ENCODE measurements at regions of chr5 and their contacts with region 1.

Region 1: DNA sequence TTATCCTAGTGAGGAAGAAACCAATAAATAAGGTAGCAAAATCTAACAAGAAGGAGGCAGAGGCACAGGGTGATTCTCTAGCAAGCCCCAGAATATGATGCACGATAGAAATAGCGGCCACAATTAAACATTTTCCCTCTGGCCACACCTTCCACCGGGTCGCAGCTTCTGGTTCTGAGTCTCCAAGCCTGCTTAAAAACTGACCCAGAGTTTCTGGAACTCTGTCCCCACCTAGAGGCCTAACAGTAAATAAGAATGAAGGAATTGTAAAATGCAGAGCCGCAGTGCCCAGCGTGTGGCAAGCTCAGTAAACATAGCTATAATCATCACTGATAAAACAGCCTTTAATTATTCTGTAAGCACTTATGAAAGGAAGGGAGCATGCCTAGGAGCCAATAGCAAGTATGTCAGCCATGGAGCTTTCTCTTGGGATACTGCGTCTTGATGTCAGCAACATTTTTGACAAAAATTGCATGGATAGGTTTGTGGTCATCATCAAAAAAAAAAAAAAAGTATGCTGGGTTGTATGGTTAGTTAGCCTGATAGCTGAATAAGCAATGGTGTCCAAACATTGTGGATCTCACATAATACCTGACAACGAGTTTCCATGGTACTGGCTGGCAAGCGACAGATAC is 465.5 kb downstream of the DNAH5 start:
- DNase-seq: peak; percentile 56
- H3K4me3 ChIP-seq: no peak overlapping the region
- H3K27ac ChIP-seq: no peak overlapping the region
- H3K4me1 ChIP-seq: peaks cover 13% of the 10 kb centered on the region
- H3K27me3 ChIP-seq: peaks cover 1 to 4% of the 10 kb centered on the region in 2 experiments
- CTCF ChIP-seq: peak; percentile 36 to 46
- POLR2A ChIP-seq: no peak

Region 2: DNA sequence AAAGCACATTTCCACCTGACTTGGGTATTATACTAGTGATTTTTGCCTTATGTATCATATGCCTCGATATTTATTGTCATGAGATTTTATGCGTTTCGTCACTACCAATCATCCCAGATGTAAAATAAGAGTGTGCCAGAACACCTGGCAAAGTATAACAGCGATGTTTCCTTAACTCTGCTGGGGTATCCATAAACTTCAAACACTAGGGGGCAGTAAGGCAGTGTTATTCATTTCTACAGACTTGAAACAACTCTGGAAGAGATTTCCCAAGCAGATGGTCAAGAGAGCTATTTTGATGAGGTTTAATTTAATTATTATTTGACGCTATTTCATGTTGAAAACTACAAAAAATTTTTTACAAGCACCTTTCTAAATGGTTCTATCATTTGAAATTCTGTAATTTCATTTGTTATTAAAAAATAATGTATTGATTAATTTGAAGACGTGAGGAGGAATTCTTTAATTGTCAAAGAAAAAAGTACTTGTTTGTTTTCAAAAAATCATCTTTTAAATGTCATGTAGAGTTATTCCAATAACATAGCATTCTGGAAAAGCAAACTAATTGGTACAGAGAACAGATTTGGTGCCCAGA is 1186.2 kb before region 1 on chr5:
- CTCF ChIA-PET with region 1: interaction called, 11 read pairs
- POLR2A ChIA-PET with region 1: no interaction called
- dilution Hi-C with region 1: no loop called
- intact Hi-C with region 1: no loop called
- DNase-seq: no peak
- H3K4me3 ChIP-seq: no peak overlapping the region
- H3K27ac ChIP-seq: no peak overlapping the region
- H3K4me1 ChIP-seq: no peaks in the 10 kb centered on the region
- H3K27me3 ChIP-seq: no peaks in the 10 kb centered on the region
- CTCF ChIP-seq: no peak
- POLR2A ChIP-seq: no peak

Region 3: GRCh38 chr5:12910641-12911040 is 568.3 kb before region 1 on chr5:
- CTCF ChIA-PET with region 1: no interaction called
- POLR2A ChIA-PET with region 1: no interaction called
- dilution Hi-C with region 1: no loop called
- intact Hi-C with region 1: loop called (anchors 10 kb)
- DNase-seq: peak; percentile 84
- H3K4me3 ChIP-seq: no peak overlapping the region
- H3K27ac ChIP-seq: peak overlapping the region; percentile 70
- H3K4me1 ChIP-seq: peaks cover 14% of the 10 kb centered on the region
- H3K27me3 ChIP-seq: no peaks in the 10 kb centered on the region
- CTCF ChIP-seq: no peak
- POLR2A ChIP-seq: no peak

Region 4: GRCh38 chr5:13250450-13251291 is 228.3 kb before region 1 on chr5:
- CTCF ChIA-PET with region 1: interaction called, 17 read pairs
- POLR2A ChIA-PET with region 1: no interaction called
- dilution Hi-C with region 1: no loop called
- intact Hi-C with region 1: loop called (anchors 1 kb)
- DNase-seq: peak; percentile 39
- H3K4me3 ChIP-seq: no peak overlapping the region
- H3K27ac ChIP-seq: peak overlapping the region; percentile 94
- H3K4me1 ChIP-seq: peaks cover 44% of the 10 kb centered on the region
- H3K27me3 ChIP-seq: no peaks in the 10 kb centered on the region
- CTCF ChIP-seq: peak; percentile 51 to 58
- POLR2A ChIP-seq: no peak

Region 5: GRCh38 chr5:13378083-13378482 is 100.9 kb before region 1 on chr5:
- CTCF ChIA-PET with region 1: no interaction called
- POLR2A ChIA-PET with region 1: no interaction called
- dilution Hi-C with region 1: no loop called
- intact Hi-C with region 1: no loop called
- DNase-seq: peak; percentile 32
- H3K4me3 ChIP-seq: no peak overlapping the region
- H3K27ac ChIP-seq: no peak overlapping the region
- H3K4me1 ChIP-seq: no peaks in the 10 kb centered on the region
- H3K27me3 ChIP-seq: no peaks in the 10 kb centered on the region
- CTCF ChIP-seq: no peak
- POLR2A ChIP-seq: no peak

Region 6: DNA sequence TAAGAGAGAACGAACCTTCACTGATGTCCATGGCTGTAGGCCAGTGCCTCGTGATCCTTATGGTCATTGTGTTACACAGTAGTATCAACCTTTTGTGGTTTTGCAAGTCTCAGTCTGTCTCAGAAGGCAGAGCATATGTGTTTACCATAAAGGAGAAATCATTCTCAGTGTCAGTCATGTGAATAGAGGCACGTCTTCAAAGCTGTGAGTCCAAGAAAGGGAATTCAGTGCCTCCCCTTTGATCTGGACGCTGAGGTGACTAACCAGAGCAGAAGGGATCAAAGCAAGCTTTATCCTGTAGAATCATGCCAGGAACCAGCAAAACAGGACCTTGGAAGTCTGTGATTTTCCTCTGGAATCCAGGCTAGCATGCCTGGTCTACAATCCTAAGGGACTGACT is 31.7 kb after region 1 on chr5:
- CTCF ChIA-PET with region 1: no interaction called
- POLR2A ChIA-PET with region 1: no interaction called
- dilution Hi-C with region 1: no loop called
- intact Hi-C with region 1: no loop called
- DNase-seq: no peak
- H3K4me3 ChIP-seq: no peak overlapping the region
- H3K27ac ChIP-seq: no peak overlapping the region
- H3K4me1 ChIP-seq: no peaks in the 10 kb centered on the region
- H3K27me3 ChIP-seq: no peaks in the 10 kb centered on the region
- CTCF ChIP-seq: no peak
- POLR2A ChIP-seq: no peak

Region 7: GRCh38 chr5:13581914-13582313 is 103.0 kb after region 1 on chr5:
- CTCF ChIA-PET with region 1: no interaction called
- POLR2A ChIA-PET with region 1: no interaction called
- dilution Hi-C with region 1: no loop called
- intact Hi-C with region 1: no loop called
- DNase-seq: no peak
- H3K4me3 ChIP-seq: no peak overlapping the region
- H3K27ac ChIP-seq: no peak overlapping the region
- H3K4me1 ChIP-seq: no peaks in the 10 kb centered on the region
- H3K27me3 ChIP-seq: no peaks in the 10 kb centered on the region
- CTCF ChIP-seq: no peak
- POLR2A ChIP-seq: no peak

Measured in endothelial cell of umbilical vein (primary cell).